ENCODE measurements at regions of chr6 and their contacts with region 1.

Region 1: GRCh38 chr6:135604035-135604860 is 106.7 kb upstream of the AHI1 start:
- DNase-seq: peak; percentile 10
- H3K4me3 Mint-ChIP-seq: no peak overlapping the region
- H3K27ac Mint-ChIP-seq: no peak overlapping the region
- H3K4me1 Mint-ChIP-seq: peaks cover 22% of the 10 kb centered on the region
- H3K27me3 Mint-ChIP-seq: no peaks in the 10 kb centered on the region

Region 2: DNA sequence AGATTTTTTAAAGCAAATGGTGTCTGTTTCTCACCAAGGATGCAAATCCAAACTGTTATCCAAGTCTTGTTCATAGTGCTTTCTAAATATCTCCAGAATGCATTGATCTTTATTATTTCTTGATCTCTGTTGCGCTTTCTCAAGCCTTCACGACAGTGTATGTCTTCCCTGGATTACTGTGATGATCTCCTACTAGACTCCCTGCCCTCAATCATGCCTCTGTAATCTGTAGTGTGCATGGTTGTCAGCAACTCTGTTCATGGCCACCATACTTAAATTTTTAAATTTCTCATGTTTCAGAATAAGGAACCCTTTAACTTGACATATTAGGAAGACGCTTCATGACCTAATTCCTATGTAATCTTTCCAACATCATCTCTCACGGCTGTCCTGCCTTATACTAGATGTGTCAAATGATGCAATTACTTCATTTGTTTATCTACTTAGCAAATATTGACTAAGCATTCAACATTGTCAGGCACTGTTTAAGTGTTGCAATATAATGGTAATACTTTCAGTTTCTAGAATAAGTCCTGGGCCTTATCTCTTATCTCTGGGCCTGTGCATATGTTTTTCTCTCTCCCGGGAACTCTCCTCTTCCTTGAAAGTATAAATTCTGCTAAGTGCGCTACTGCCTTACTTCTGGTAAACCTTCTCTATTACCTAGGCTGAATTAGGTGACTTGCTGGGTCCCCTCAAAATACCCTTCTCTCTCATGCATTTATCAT is 81.1 kb before region 1 on chr6:
- CTCF ChIA-PET with region 1: no interaction called
- intact Hi-C with region 1: no loop called
- DNase-seq: no peak
- H3K4me3 Mint-ChIP-seq: no peak overlapping the region
- H3K27ac Mint-ChIP-seq: no peak overlapping the region
- H3K4me1 Mint-ChIP-seq: no peaks in the 10 kb centered on the region
- H3K27me3 Mint-ChIP-seq: no peaks in the 10 kb centered on the region

Region 3: DNA sequence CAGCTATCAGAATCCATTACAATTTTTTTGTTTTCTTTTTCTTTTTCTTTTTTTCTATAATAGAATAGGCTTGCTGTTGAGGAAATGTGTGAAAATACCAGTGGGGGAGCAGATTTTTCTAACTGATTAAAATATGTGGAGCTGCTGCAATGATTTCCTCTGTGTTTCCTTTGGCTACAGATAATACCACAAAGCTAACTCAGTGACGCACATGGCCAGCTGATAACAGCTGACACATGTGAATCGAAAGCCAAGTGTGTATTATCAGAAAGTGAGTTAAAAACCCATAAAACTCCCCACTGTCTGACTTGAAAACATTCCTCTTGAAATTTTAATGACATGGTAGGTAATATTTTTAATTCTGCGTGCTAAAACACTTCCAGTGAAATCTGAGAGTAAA is 35.9 kb before region 1 on chr6:
- CTCF ChIA-PET with region 1: no interaction called
- intact Hi-C with region 1: loop called (anchors 2 kb)
- DNase-seq: peak; percentile 65
- H3K4me3 Mint-ChIP-seq: no peak overlapping the region
- H3K27ac Mint-ChIP-seq: no peak overlapping the region
- H3K4me1 Mint-ChIP-seq: peaks cover 8% of the 10 kb centered on the region
- H3K27me3 Mint-ChIP-seq: peaks cover 3% of the 10 kb centered on the region

Region 4: DNA sequence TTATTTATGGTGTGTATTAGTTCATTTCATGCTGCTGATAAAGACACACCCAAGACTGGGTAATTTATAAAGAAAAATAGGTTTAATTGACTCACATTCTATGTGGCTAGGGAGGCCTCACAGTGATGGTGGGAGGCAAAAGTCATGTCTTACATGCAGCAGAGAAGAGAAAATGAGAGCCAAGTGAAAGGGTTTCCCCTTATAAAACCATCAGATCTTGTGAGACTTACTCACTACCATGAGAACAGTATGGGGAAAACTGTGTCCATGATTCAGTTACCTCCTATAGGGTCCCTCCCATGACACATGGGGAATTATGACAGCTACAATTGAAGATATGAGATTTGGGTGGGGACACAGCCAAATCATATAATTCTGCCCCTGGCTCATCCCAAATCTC is 43.3 kb after region 1 on chr6:
- CTCF ChIA-PET with region 1: no interaction called
- intact Hi-C with region 1: loop called (anchors 5 kb)
- DNase-seq: peak; percentile 28
- H3K4me3 Mint-ChIP-seq: no peak overlapping the region
- H3K27ac Mint-ChIP-seq: no peak overlapping the region
- H3K4me1 Mint-ChIP-seq: peaks cover 27% of the 10 kb centered on the region
- H3K27me3 Mint-ChIP-seq: no peaks in the 10 kb centered on the region

Region 5: DNA sequence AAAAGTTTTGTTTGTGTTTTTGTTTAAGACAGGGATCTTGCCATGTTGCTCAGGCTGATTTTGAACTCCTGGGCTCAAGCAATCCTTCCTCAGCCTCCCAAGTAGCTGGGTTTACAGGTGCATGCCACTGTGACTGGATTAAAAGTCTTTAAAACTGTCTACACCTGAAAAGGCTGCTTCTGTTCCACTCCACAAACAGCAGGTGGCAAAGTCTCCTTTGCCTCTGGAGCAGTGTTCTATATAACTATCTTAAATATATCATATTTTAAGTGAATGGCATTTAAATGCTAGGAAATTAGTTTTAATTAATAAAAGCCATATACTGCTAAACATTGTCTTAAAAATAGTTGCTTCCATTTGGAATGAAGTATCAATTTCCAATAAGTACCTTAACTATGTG is 774.6 kb after region 1 on chr6:
- CTCF ChIA-PET with region 1: no interaction called
- intact Hi-C with region 1: no loop called
- DNase-seq: no peak
- H3K4me3 Mint-ChIP-seq: no peak overlapping the region
- H3K27ac Mint-ChIP-seq: no peak overlapping the region
- H3K4me1 Mint-ChIP-seq: no peaks in the 10 kb centered on the region
- H3K27me3 Mint-ChIP-seq: no peaks in the 10 kb centered on the region

Measured in activated naive CD4-positive, alpha-beta T cell treated with anti-CD3 and anti-CD28 coated beads for 36 hours (primary cell).